ENCODE measurements at regions of chr1 and their contacts with region 1.

Region 1: GRCh38 chr1:27551170-27551956 is 52.6 kb downstream of the AHDC1 start:
- DNase-seq: no peak

Region 2: DNA sequence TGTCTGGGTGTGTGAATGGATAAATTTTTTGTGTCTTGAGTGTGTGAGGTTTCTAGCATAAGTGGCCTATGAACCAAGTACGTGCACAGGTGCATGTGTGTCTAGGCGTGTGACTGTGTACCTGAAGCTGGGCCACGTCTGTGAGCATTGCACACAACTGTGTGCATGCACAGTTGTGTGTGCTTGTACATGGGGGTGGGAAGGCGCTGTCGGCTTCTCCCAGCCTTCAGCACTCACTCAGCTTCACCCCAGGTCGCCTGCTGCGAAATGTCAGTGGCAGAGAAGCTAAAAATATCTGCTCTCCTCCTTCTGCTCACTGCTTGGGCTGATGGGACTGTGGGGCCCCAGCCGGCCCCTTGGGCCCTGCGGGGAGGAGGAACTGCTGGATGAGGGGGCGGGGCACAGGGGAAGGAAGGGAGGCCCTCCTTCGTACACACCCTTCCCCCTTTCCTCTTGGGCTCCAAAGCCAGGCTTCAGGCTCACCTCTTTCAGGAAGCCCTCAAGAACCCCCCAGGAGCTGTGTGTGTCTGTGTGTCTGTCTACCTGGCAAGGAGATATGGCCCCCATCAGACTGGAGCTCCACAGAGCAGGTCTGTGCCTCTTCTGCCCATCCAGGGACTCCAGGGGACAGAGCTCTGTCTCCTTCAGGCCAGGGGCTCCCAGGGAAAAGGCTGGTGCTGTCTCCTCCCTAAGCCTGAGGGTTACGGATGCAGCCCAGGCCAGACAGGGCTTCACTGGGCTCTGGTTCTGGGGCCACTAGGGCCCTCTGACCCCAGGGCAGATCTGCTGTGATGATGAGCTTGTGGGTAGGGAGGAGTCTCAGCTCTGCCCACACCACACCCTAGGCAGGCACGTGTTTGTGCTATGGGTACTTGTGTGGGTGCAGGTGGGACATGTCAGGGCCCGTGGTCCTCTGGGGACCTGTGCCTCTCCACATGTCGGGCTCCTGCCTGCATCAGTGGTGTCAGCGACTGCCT is 25.8 kb before region 1 on chr1:
- intact Hi-C with region 1: loop called in 1 of 2 experiments (anchors 2 kb)
- DNase-seq: peak; percentile 93

Region 3: GRCh38 chr1:29282924-29283811 is 1731.8 kb after region 1 on chr1:
- intact Hi-C with region 1: no loop called
- DNase-seq: no peak

Measured in posterior vena cava (tissue), 2 donors.